Left ventricle myocardium inferior (tissue), 1 donor: ENCODE measurements at regions of chr7 and their contacts with region 1.

Region 1: GRCh38 chr7:140517546-140518369 is 38.5 kb upstream of the MKRN1 start:
- DNase-seq: peak; percentile 90
- H3K4me3 ChIP-seq: no peak overlapping the region
- H3K27ac ChIP-seq: peak overlapping the region; percentile 69
- H3K4me1 ChIP-seq: peaks cover 20% of the 10 kb centered on the region
- H3K27me3 ChIP-seq: no peaks in the 10 kb centered on the region
- CTCF ChIP-seq: peak; percentile 94

Region 2: DNA sequence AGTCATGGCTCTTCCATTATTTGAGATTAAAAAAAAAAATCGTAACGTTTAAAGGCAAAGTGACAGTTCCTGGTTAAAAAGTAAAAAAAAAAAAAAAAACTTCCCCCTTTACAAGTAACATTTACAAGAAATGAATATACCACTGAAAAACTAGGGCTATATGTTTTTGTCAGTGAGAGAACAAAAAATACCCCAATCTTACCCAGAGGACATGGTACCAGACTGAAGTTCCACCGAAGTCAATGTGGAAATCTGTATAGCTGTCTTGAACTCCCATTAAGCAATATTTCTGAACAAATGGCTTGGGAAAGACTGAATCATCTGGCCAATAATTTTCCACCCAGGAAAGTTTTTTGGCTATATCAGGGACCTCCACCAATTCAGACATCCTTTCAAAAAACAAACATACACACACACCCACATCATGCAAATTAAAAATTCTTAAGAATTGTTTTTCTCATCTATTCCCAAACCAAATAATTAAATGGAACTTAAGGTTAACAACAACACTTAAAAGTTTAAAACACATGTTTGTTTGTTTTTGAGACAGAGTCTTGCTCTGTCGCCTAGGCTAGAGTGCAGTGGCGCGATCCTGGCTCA is 391.2 kb before region 1 on chr7:
- intact Hi-C with region 1: no loop called
- DNase-seq: no peak
- H3K4me3 ChIP-seq: no peak overlapping the region
- H3K27ac ChIP-seq: no peak overlapping the region
- H3K4me1 ChIP-seq: no peaks in the 10 kb centered on the region
- H3K27me3 ChIP-seq: no peaks in the 10 kb centered on the region
- CTCF ChIP-seq: no peak

Region 3: DNA sequence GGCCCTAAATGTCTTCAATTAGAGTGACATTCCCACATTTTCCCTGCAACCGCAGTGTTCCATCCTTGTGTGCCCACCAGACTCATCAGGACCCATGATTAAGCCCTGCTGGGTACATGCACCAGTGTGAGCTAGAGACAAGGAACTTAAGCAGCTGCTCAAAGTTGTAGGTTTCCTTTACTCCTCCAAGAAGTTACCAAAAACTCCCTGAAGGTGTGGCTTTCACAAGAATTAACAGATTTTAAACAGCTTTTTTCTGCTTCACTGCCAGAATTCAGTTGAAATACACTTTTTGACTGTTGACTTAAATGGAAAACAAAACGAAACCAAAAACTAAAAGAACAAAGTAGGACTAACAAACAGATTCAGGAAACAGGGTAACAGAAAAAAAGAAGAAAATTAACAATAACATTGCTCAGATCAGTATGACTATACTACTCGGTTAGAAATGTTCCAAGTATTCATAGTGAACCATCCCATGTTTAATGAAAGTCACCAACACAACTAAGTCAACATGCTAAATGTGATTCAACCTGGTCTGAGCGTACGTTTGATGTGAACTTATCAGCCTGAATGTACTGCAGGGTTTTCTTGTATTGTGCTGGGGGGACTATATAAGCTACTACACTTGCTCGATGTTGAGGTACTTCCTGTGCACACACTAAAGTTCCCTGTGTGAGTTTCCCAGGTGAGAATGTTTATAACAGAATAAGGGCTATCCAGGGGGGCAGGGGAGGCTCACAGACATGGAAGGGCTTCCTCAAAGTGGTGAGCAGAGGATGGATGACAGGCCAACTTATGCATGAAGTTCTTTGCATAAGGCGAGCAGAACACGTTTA is 141.6 kb before region 1 on chr7:
- intact Hi-C with region 1: no loop called
- DNase-seq: no peak
- H3K4me3 ChIP-seq: no peak overlapping the region
- H3K27ac ChIP-seq: no peak overlapping the region
- H3K4me1 ChIP-seq: no peaks in the 10 kb centered on the region
- H3K27me3 ChIP-seq: no peaks in the 10 kb centered on the region
- CTCF ChIP-seq: no peak

Region 4: DNA sequence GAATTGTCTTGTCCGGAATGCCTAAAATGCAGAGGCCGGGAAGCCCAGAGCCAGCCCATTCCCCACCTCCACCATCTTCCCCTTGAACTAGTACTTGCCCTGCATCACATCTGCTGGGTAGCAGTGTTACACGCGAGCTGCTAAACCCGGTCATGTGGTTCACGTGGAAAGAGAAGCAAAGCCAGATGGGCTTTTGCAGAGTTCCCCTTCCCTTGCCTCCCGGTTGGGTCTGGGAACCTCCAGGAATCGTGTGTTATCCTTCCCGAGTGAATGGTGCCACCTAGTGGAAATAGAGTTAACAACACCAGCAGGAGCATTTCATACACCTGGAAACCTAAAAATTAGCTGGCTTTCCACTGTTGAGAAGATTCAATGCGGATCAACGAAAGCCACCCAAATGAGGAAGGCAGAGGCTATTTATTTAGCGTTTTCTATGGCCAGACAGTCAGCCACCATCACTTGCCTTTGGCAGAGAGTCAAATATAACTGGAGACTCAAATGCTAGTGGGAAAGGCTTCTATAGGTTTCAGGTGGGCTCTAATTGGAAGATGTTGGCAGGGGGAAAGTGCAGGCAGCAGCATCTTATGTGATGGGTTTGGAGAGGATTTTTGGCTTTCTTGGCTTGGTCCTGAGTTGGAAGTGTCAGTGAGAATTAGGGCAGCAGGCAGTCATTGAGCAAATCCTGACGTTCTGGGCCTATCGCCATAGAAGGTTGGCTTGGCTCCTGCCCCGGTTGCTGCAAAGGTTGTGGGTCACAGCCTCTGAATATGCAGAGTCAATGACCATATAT is 135.8 kb after region 1 on chr7:
- intact Hi-C with region 1: loop called (anchors 2 kb)
- DNase-seq: no peak
- H3K4me3 ChIP-seq: no peak overlapping the region
- H3K27ac ChIP-seq: no peak overlapping the region
- H3K4me1 ChIP-seq: peaks cover 51% of the 10 kb centered on the region
- H3K27me3 ChIP-seq: no peaks in the 10 kb centered on the region
- CTCF ChIP-seq: peak; percentile 96